Naive thymus-derived CD4-positive, alpha-beta T cell (primary cell): ENCODE measurements at regions of chr6 and their contacts with region 1.

Region 1: DNA sequence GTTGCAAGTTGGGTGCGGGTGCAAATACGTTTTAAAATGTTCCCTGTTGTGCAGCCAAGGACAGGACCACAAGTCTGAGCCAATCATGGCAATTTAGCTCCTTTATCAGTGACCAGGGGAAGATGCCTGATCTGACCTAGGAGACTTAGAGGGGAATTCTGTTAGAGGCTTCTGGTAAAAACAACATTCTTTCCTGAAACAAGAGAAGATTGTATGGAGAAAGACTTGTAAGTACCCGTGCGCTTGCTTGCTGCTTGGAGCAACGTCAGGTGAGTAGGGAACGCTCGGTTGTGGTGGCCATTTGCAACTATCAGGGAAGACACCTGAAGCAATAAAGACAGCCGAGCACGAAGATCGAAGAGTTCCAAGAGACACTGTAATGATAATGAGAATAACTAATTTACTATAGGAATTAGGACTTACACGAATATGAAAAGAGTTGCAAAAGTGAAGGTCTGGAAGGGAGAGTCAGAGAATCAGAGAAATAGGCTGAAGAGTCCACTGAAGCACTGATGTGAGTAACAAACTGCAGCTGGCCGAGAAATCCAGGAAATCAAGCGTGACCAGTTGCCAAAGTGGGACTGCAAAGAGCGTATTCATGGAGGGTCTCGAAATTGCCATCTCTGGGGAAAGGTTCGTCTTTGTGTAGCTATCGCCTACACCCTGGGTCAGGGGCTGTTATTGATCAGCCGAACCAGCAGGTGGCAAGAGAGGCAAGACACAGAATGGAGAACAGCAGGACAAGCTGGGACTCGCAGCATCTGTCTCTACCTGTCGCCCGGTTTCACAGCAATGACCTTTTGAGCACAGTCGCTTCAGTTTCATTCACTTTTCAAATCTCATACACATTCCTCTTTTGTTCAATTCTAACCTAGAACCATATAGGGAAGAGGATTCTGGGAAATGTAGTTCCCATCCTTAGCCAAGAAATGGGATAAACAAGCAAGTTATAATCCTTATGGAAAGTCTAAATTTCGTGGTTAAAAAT is 26.1 kb downstream of the LOC128125822 start:
- DNase-seq: peak; percentile 39 to 80 (median 74)
- ATAC-seq: peak; percentile 99
- H3K4me3 ChIP-seq: peak overlapping the region; percentile 53
- H3K4me3 Mint-ChIP-seq: peak overlapping the region; percentile 73 to 93 (median 88)
- H3K27ac ChIP-seq: no peak overlapping the region
- H3K27ac Mint-ChIP-seq: peak overlapping the region in 5 of 9 donors; percentile 3 to 73 (median 52)
- H3K4me1 ChIP-seq: peaks cover 0 to 4% of the 10 kb centered on the region in 2 donors
- H3K4me1 Mint-ChIP-seq: peaks cover 7 to 20% (median 18%) of the 10 kb centered on the region in 7 donors
- H3K27me3 ChIP-seq: no peaks in the 10 kb centered on the region
- H3K27me3 Mint-ChIP-seq: peaks cover 0 to 22% (median 5%) of the 10 kb centered on the region in 5 donors

Region 2: GRCh38 chr6:62974452-62974851 is 623.9 kb before region 1 on chr6:
- CTCF ChIA-PET with region 1: no interaction called
- POLR2A ChIA-PET with region 1: no interaction called
- intact Hi-C with region 1: no loop called
- DNase-seq: no peak
- ATAC-seq: no peak
- H3K4me3 ChIP-seq: no peak overlapping the region
- H3K4me3 Mint-ChIP-seq: no peak overlapping the region
- H3K27ac ChIP-seq: no peak overlapping the region
- H3K27ac Mint-ChIP-seq: no peak overlapping the region
- H3K4me1 ChIP-seq: no peaks in the 10 kb centered on the region
- H3K4me1 Mint-ChIP-seq: no peaks in the 10 kb centered on the region
- H3K27me3 ChIP-seq: no peaks in the 10 kb centered on the region
- H3K27me3 Mint-ChIP-seq: no peaks in the 10 kb centered on the region

Region 3: GRCh38 chr6:63263444-63263843 is 334.9 kb before region 1 on chr6:
- CTCF ChIA-PET with region 1: no interaction called
- POLR2A ChIA-PET with region 1: no interaction called
- intact Hi-C with region 1: no loop called
- DNase-seq: no peak
- ATAC-seq: no peak
- H3K4me3 ChIP-seq: no peak overlapping the region
- H3K4me3 Mint-ChIP-seq: no peak overlapping the region
- H3K27ac ChIP-seq: no peak overlapping the region
- H3K27ac Mint-ChIP-seq: no peak overlapping the region
- H3K4me1 ChIP-seq: no peaks in the 10 kb centered on the region
- H3K4me1 Mint-ChIP-seq: peaks cover 0 to 1% (median 0%) of the 10 kb centered on the region in 7 donors
- H3K27me3 ChIP-seq: no peaks in the 10 kb centered on the region
- H3K27me3 Mint-ChIP-seq: peaks cover 0 to 5% (median 0%) of the 10 kb centered on the region in 5 donors

Region 4: GRCh38 chr6:63305277-63305676 is 293.1 kb before region 1 on chr6:
- CTCF ChIA-PET with region 1: no interaction called
- POLR2A ChIA-PET with region 1: no interaction called
- intact Hi-C with region 1: no loop called
- DNase-seq: no peak
- ATAC-seq: no peak
- H3K4me3 ChIP-seq: no peak overlapping the region
- H3K4me3 Mint-ChIP-seq: no peak overlapping the region
- H3K27ac ChIP-seq: no peak overlapping the region
- H3K27ac Mint-ChIP-seq: no peak overlapping the region
- H3K4me1 ChIP-seq: no peaks in the 10 kb centered on the region
- H3K4me1 Mint-ChIP-seq: no peaks in the 10 kb centered on the region
- H3K27me3 ChIP-seq: no peaks in the 10 kb centered on the region
- H3K27me3 Mint-ChIP-seq: peaks cover 0 to 7% (median 0%) of the 10 kb centered on the region in 5 donors

Region 5: DNA sequence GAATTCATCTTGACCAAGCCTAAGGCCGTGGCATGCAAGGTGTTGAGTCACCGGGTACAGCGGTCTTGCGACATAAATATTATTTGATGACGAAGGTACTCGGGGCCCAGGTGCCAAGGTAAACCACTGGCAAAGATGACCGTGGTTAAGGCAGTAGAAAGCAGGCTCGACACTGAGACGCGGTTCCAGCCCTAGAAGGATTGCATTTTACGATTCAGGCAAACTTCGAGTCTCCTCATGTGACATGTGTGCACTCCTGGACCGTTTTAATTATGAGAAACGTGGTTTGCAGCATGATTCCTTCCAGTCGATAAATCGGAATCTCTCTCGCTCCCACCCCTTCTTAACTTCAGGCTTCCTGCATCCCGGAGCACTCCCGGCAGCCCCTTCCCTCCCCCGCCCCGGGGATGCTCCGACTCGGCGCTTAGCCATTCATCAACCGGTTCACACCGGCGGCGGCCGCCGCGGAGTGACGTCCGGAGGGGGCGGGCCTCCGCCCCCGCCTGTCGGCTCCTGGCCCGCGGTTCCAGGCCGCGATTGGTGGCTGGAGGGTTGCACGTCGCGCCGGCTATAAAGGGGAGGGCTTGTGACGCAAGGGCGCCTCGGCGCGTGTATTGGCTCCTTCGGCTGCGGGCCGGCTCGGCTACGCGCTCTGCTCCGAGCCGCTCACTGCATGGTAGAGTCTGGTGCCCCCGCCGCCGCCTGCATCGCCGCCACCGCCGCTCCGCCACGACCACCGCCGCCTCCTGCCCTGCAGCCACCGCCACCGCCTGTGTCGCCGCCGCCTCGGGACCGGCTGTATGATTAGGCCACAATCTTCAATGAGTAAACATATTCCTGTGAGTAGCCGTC is 26.2 kb before region 1 on chr6 and contains the starts of genes LOC128125822 and PTP4A1:
- CTCF ChIA-PET with region 1: interaction called, 6 read pairs
- POLR2A ChIA-PET with region 1: interaction called, 4 read pairs
- intact Hi-C with region 1: loop called (anchors 1 kb)
- DNase-seq: peak; percentile 92 to 98 (median 97)
- ATAC-seq: peak; percentile 90
- H3K4me3 ChIP-seq: peak within 1 kb of the TSS; percentile 91
- H3K4me3 Mint-ChIP-seq: peak within 1 kb of the TSS; percentile 87 to 96 (median 94)
- H3K27ac ChIP-seq: peak within 1 kb of the TSS; percentile 97
- H3K27ac Mint-ChIP-seq: peak within 1 kb of the TSS; percentile 89 to 100 (median 98)
- H3K4me1 ChIP-seq: peaks cover 10 to 16% of the 10 kb centered on the region in 2 donors
- H3K4me1 Mint-ChIP-seq: peaks cover 21 to 47% (median 40%) of the 10 kb centered on the region in 7 donors
- H3K27me3 ChIP-seq: no peaks in the 10 kb centered on the region
- H3K27me3 Mint-ChIP-seq: no peaks in the 10 kb centered on the region
- total RNA-seq, gene PTP4A1: 26.4 to 165 (median 73.8) TPM

Region 6: GRCh38 chr6:63705707-63706106 is 107.4 kb after region 1 on chr6:
- CTCF ChIA-PET with region 1: interaction called, 3 read pairs
- POLR2A ChIA-PET with region 1: no interaction called
- intact Hi-C with region 1: loop called (anchors 2 to 5 kb)
- DNase-seq: no peak
- ATAC-seq: no peak
- H3K4me3 ChIP-seq: no peak overlapping the region
- H3K4me3 Mint-ChIP-seq: no peak overlapping the region
- H3K27ac ChIP-seq: no peak overlapping the region
- H3K27ac Mint-ChIP-seq: peak overlapping the region in 2 of 9 donors; percentile 30 to 33
- H3K4me1 ChIP-seq: no peaks in the 10 kb centered on the region
- H3K4me1 Mint-ChIP-seq: peaks cover 5 to 20% (median 13%) of the 10 kb centered on the region in 7 donors
- H3K27me3 ChIP-seq: no peaks in the 10 kb centered on the region
- H3K27me3 Mint-ChIP-seq: no peaks in the 10 kb centered on the region

Region 7: GRCh38 chr6:63802606-63803206 is 204.4 kb after region 1 on chr6:
- CTCF ChIA-PET with region 1: no interaction called
- POLR2A ChIA-PET with region 1: no interaction called
- intact Hi-C with region 1: loop called (anchors 1 kb)
- DNase-seq: no peak
- ATAC-seq: no peak
- H3K4me3 ChIP-seq: no peak overlapping the region
- H3K4me3 Mint-ChIP-seq: no peak overlapping the region
- H3K27ac ChIP-seq: no peak overlapping the region
- H3K27ac Mint-ChIP-seq: no peak overlapping the region
- H3K4me1 ChIP-seq: no peaks in the 10 kb centered on the region
- H3K4me1 Mint-ChIP-seq: peaks cover 0 to 3% (median 0%) of the 10 kb centered on the region in 7 donors
- H3K27me3 ChIP-seq: no peaks in the 10 kb centered on the region
- H3K27me3 Mint-ChIP-seq: peaks cover 2 to 12% (median 5%) of the 10 kb centered on the region in 5 donors

Region 8: DNA sequence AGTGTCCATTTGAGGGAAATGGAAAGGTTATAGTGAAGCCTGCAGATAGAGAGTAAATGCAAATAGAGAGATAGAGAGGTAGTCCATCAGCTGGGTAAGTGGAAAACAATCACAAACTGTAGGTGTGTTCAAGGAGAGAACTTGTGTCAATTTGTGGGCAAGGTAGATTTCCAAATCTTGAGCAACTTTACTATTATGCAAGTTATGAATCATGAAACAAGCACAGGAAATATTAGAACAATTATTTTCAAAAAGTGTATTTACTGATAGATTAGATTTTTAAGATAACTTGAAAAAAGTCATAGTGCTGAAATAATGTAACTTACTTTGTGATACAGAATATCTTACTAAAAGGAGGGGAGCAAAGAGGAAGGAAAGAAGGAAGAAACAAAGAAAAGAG is 1315.8 kb after region 1 on chr6:
- CTCF ChIA-PET with region 1: no interaction called
- POLR2A ChIA-PET with region 1: no interaction called
- intact Hi-C with region 1: no loop called
- DNase-seq: no peak
- ATAC-seq: no peak
- H3K4me3 ChIP-seq: no peak overlapping the region
- H3K4me3 Mint-ChIP-seq: no peak overlapping the region
- H3K27ac ChIP-seq: no peak overlapping the region
- H3K27ac Mint-ChIP-seq: no peak overlapping the region
- H3K4me1 ChIP-seq: no peaks in the 10 kb centered on the region
- H3K4me1 Mint-ChIP-seq: no peaks in the 10 kb centered on the region
- H3K27me3 ChIP-seq: no peaks in the 10 kb centered on the region
- H3K27me3 Mint-ChIP-seq: no peaks in the 10 kb centered on the region